CD4-positive, alpha-beta memory T cell (primary cell): ENCODE measurements at regions of chr12 and their contacts with region 1.

Region 1: DNA sequence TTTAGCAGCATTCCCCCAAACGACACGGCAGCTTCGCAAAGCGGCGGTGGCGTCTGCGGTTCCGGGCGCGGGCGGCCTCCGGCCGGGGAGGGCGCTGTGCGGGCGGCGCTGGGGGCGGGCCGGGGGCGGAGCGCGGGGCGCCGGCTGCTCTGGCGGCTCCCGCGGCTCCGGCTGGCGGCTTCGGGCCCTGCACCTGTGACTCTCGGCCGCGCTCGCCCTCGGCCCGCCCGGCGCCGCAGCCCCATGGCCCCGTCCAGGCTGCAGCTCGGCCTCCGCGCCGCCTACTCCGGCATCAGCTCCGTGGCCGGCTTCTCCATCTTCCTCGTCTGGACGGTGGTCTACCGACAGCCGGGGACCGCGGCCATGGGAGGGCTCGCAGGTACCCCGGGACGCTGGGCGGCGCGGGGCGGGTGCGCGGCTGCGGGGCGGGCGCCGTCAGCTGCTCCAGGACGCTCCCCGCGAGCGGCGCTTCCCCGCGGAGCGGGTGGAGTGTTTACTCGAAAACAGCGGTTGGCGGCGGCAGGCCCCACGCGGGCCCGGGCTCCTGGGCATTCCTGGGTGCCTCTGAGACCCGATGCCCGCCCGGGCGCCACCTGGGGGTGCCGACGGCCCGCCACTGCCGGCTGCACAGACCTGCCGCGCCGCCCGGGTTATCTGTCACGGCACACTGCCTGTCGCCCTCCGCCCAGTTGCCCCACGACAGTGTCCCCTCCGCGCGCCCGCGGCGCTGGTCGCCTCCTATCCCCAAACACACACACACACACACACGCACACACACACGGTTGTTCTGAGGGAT is at the start of gene SLC48A1:
- DNase-seq: peak; percentile 63 to 83 (median 76)
- H3K4me3 ChIP-seq: peak within 1 kb of the TSS in 1 of 2 donors; percentile 62
- H3K4me3 Mint-ChIP-seq: peak within 1 kb of the TSS; percentile 84 to 94 (median 89)
- H3K27ac ChIP-seq: peak within 1 kb of the TSS; percentile 47
- H3K27ac Mint-ChIP-seq: peak within 1 kb of the TSS; percentile 77 to 91 (median 84)
- H3K4me1 ChIP-seq: peaks cover 16% of the 10 kb centered on the region
- H3K4me1 Mint-ChIP-seq: peaks cover 5 to 23% (median 14%) of the 10 kb centered on the region in 4 donors
- H3K27me3 ChIP-seq: no peaks in the 10 kb centered on the region
- H3K27me3 Mint-ChIP-seq: no peaks in the 10 kb centered on the region
- total RNA-seq, gene SLC48A1: 12.1 to 12.3 TPM

Region 2: DNA sequence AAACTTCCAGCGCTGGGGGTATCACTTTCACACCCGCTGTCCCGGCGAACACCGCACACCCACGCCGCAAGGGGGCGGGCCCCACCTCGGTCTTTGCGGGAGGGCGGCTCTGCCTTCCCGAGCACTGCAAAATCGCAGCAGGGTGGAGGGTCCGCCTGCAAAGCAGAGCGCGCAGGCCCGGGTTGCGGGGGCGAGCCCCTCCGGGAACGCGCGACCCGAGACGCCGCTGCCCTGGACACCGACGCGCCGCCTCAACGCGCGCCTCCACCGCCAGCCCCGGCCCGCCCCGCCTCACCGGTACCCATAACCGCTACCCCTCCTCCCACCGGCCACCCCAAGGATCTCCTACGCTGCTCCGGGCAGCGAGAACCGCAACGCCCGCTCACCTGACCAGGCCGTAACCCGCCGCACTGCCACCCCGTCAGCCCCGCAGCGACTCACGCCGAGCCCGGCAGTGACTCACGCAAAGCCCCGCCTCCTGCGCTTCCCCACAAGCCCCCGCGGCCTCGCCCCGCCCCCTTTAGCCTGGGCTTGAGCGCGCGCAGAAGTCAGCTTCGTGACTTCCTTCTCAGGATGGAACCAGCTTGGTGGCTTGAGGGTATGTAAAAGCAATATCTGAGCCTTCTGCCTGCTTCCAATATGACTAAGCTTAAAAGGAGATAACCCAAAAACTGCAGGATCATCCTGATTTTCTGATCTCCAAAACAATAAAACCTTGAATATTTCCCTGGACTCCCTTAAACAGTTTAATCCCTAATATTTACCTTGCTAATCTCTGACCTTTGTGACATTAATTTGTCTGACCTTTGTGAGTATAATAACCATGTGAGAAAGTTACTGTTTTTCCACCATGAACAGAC is 67.5 kb before region 1 on chr12 and contains the start of gene RPAP3:
- CTCF ChIA-PET with region 1: interaction called, 318 read pairs
- POLR2A ChIA-PET with region 1: interaction called, 18 read pairs
- intact Hi-C with region 1: no loop called
- DNase-seq: peak; percentile 93 to 96 (median 93)
- H3K4me3 ChIP-seq: peak within 1 kb of the TSS; percentile 60 to 70
- H3K4me3 Mint-ChIP-seq: peak within 1 kb of the TSS; percentile 95 to 100 (median 98)
- H3K27ac ChIP-seq: peak within 1 kb of the TSS; percentile 81
- H3K27ac Mint-ChIP-seq: peak within 1 kb of the TSS; percentile 93 to 99 (median 97)
- H3K4me1 ChIP-seq: peaks cover 54% of the 10 kb centered on the region
- H3K4me1 Mint-ChIP-seq: peaks cover 35 to 56% (median 47%) of the 10 kb centered on the region in 4 donors
- H3K27me3 ChIP-seq: no peaks in the 10 kb centered on the region
- H3K27me3 Mint-ChIP-seq: no peaks in the 10 kb centered on the region
- total RNA-seq, gene RPAP3: 40.8 to 41.8 TPM

Region 3: DNA sequence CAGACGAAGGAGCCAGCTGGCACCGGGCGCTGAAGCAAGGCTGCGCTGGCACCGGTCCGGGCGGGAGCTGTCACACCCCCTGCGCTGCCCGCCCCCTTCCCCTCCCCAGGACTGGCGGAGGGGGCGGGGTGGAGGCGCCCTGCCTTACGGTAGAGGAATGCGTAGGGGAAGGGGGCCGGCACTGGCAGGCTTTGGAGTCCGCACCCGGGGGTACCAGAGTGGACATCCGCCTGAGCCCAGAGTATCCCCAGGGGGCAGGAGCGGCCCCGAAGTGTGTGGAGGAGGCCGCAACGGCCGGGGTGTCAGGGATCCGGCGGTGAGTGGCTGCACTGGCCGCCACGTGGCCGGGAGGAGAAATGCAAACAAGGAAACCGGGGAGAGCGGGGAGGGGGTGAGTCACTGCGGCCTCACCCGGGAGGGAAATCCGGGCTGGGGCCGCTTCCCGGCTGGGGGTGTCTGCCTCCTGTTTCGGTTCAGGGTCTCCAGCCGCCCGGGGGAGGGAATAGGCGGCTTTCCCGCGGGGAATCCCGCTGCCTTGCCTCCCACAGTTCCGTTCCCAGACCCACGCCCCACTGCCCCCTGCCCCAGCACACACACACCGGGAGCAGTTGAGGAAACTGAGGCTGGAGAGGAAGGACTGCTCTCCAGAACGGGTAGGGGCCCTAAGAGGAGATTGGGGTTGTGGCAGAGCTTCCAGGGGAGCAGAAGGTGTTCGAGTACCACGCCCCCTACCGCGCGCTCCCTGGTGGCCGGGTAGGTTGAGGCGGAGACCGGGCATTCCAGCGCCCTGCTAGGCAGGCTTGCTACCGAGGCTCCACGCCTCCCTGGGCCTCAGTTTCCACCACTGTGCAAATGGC is 14.2 kb before region 1 on chr12 and contains the start of gene RAPGEF3:
- CTCF ChIA-PET with region 1: interaction called, 133 read pairs
- POLR2A ChIA-PET with region 1: interaction called, 8 read pairs
- intact Hi-C with region 1: loop called (anchors 2 kb)
- DNase-seq: peak; percentile 50 to 78 (median 63)
- H3K4me3 ChIP-seq: peak within 1 kb of the TSS; percentile 42 to 52
- H3K4me3 Mint-ChIP-seq: peak within 1 kb of the TSS; percentile 72 to 83 (median 80)
- H3K27ac ChIP-seq: peak within 1 kb of the TSS; percentile 55
- H3K27ac Mint-ChIP-seq: peak within 1 kb of the TSS in 6 of 7 donors; percentile 12 to 74 (median 45)
- H3K4me1 ChIP-seq: peaks cover 40% of the 10 kb centered on the region
- H3K4me1 Mint-ChIP-seq: peaks cover 18 to 27% (median 23%) of the 10 kb centered on the region in 4 donors
- H3K27me3 ChIP-seq: no peaks in the 10 kb centered on the region
- H3K27me3 Mint-ChIP-seq: no peaks in the 10 kb centered on the region
- total RNA-seq, gene RAPGEF3: 0.15 to 0.39 TPM

Region 4: GRCh38 chr12:47812797-47813510 is 39.7 kb after region 1 on chr12:
- CTCF ChIA-PET with region 1: interaction called, 21 read pairs
- POLR2A ChIA-PET with region 1: interaction called, 20 read pairs
- intact Hi-C with region 1: loop called (anchors 1 kb)
- DNase-seq: peak; percentile 79 to 97 (median 85)
- H3K4me3 ChIP-seq: peak overlapping the region; percentile 57 to 80
- H3K4me3 Mint-ChIP-seq: peak overlapping the region; percentile 82 to 92 (median 86)
- H3K27ac ChIP-seq: peak overlapping the region; percentile 91
- H3K27ac Mint-ChIP-seq: peak overlapping the region; percentile 93 to 99 (median 97)
- H3K4me1 ChIP-seq: peaks cover 97% of the 10 kb centered on the region
- H3K4me1 Mint-ChIP-seq: peaks cover 73 to 100% (median 88%) of the 10 kb centered on the region in 4 donors
- H3K27me3 ChIP-seq: no peaks in the 10 kb centered on the region
- H3K27me3 Mint-ChIP-seq: no peaks in the 10 kb centered on the region

Region 5: GRCh38 chr12:47819896-47820630 is 46.8 kb after region 1 on chr12 and contains the start of gene HDAC7:
- CTCF ChIA-PET with region 1: interaction called, 21 read pairs
- POLR2A ChIA-PET with region 1: interaction called, 20 read pairs
- intact Hi-C with region 1: no loop called
- DNase-seq: peak; percentile 55 to 86 (median 68)
- H3K4me3 ChIP-seq: peak within 1 kb of the TSS; percentile 79 to 84
- H3K4me3 Mint-ChIP-seq: peak within 1 kb of the TSS; percentile 91 to 97 (median 95)
- H3K27ac ChIP-seq: peak within 1 kb of the TSS; percentile 79
- H3K27ac Mint-ChIP-seq: peak within 1 kb of the TSS; percentile 93 to 98 (median 97)
- H3K4me1 ChIP-seq: peaks cover 87% of the 10 kb centered on the region
- H3K4me1 Mint-ChIP-seq: peaks cover 62 to 87% (median 77%) of the 10 kb centered on the region in 4 donors
- H3K27me3 ChIP-seq: no peaks in the 10 kb centered on the region
- H3K27me3 Mint-ChIP-seq: no peaks in the 10 kb centered on the region
- total RNA-seq, gene HDAC7: 139 to 142 TPM

Region 6: GRCh38 chr12:47828608-47829536 is 55.6 kb after region 1 on chr12:
- CTCF ChIA-PET with region 1: interaction called, 484 read pairs
- POLR2A ChIA-PET with region 1: interaction called, 27 read pairs
- intact Hi-C with region 1: loop called (anchors 1 kb)
- DNase-seq: no peak
- H3K4me3 ChIP-seq: no peak overlapping the region
- H3K4me3 Mint-ChIP-seq: peak overlapping the region in 4 of 8 donors; percentile 20 to 62 (median 48)
- H3K27ac ChIP-seq: peak overlapping the region; percentile 26
- H3K27ac Mint-ChIP-seq: peak overlapping the region; percentile 72 to 92 (median 83)
- H3K4me1 ChIP-seq: peaks cover 97% of the 10 kb centered on the region
- H3K4me1 Mint-ChIP-seq: peaks cover 49 to 93% (median 78%) of the 10 kb centered on the region in 4 donors
- H3K27me3 ChIP-seq: no peaks in the 10 kb centered on the region
- H3K27me3 Mint-ChIP-seq: no peaks in the 10 kb centered on the region